ENCODE measurements at regions of chr20 and their contacts with region 1.

Region 1: GRCh38 chr20:41738604-41739206 is 120.5 kb upstream of the CHD6 start:
- DNase-seq: peak; percentile 64
- ATAC-seq: peak; percentile 72

Region 2: DNA sequence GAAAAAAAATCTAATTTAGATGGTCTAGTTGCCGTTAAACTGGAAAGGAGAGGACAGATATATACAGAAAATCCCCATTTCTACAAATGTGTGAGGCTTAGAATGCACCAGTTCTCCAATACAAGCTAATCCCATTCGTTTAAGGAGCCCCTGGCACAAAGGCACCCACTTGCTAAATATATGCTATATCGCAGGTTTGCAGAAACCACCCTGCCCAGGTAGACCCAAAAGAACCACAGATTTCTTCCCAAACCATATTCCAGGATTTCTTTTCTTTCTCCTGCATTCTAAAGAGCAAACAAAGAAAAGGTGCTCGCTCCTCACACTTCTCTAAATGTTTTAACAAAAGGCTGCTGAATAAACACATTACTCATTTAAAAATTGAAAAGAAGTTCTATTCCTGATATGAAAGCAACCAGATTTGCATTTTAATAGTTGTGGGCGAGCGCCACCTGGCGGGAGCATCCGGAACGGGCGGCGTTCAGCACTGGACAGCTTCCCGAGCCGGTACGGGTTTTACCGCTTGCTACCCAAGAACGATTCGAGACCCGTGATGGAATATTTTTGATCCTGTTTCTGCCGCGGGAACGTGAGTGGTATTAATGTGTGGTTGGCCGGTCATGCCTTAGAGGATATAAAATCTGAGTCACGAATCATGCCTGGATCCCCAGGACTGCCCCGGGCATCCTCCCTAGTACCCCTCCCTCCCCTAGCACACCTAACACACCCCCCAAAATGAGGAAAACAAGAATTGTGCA is 1449.0 kb after region 1 on chr20:
- intact Hi-C with region 1: loop called (anchors 5 kb)
- DNase-seq: peak; percentile 82
- ATAC-seq: peak; percentile 85

Measured in Right ventricle myocardium superior (tissue), 1 donor.